A549 (cell line): ENCODE measurements at regions of chr20 and their contacts with region 1.

Region 1: DNA sequence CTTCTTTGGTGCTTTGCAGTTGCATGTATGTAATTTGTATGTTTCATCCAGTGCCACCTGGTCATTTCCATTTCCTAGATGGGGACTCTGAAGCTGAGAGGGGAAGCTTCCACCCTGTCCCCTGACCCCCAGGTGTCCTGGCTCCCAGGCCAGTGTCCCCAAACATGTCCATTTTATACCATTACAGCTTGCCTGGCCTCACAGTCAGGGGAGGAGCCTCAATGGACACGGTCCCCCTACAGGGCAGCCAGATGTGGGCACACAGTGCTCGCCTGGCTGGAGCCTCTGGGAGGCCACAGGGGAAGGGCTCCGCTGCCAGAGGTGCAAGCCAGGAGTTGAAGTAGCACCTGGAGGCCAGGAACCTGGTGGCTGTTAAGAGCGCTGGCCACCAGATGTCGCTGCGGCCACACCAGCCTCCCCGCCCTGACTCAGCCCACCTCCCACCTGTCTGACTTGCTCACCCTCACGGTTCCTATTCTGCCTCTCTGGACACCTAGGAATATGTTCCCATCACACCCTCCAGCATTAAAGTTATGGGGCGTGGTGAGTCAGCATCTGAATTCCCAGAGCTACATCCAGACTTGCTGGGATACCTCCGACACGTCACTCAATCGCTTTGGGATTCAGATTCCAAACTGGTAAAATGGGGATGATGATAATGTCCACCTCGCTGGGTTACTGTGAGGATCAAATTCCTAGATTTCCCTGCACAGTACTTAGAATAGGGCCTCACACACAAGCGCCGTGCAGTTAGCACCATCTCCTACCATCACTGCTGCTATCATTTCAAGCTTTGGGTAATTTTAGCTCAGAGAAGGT is 107.4 kb downstream of the SULF2 start:
- DNase-seq: peak; percentile 59 to 67
- ATAC-seq: peak; percentile 33 to 71
- H3K4me3 ChIP-seq: no peak overlapping the region
- H3K27ac ChIP-seq: no peak overlapping the region
- H3K4me1 ChIP-seq: no peaks in the 10 kb centered on the region
- CTCF ChIP-seq: peak; percentile 86
- EP300 ChIP-seq: no peak
- POLR2A ChIP-seq: no peak
- RAD21 ChIP-seq: peak; percentile 89 to 91

Region 2: DNA sequence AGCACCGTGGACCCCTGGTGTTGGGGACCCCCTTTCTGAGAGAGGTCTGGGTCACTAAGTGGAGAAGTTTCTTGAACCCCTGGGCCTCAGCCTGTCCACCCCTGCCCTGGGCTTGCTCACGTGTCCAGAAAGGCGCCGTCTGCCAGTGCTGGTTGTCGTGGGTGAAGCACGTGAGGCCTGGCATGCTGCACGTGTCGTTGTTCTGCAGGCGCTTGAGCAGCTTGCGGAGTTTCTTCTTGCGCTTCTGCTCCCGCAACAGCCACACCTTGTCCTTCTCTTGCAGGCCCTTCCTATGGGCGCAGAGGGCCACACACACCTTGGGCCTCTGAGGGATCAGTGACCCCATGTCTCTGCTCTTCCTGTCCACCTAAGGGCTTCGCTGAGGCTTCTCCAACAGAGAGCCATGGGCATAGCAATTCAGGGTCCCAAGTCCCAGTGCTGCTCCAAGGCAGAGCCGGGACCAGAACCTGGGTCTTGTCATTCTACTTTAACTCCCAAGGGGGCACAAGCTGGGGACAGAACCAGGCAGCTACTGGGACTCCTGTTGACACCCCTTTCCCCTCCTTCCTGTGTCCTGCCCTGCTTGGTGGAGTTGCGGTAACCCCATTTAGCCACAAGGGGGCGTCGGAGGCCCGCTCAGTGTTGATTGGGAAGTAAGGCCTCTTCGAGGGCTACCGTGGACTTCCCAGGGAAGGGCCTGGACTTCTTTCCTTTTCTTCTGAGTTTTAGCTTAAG is 14.3 kb before region 1 on chr20:
- CTCF ChIA-PET with region 1: interaction called, 64 read pairs
- POLR2A ChIA-PET with region 1: no interaction called
- DNase-seq: peak; percentile 76 to 80
- ATAC-seq: peak; percentile 76 to 84
- H3K4me3 ChIP-seq: no peak overlapping the region
- H3K27ac ChIP-seq: peak overlapping the region in 1 of 2 experiments; percentile 64; a peak in 3 of 6 replicates
- H3K4me1 ChIP-seq: peaks cover 4% of the 10 kb centered on the region; the same call in 1 of the 3 replicates
- CTCF ChIP-seq: peak; percentile 87
- EP300 ChIP-seq: no peak
- POLR2A ChIP-seq: no peak
- RAD21 ChIP-seq: peak; percentile 72 to 76

Region 3: DNA sequence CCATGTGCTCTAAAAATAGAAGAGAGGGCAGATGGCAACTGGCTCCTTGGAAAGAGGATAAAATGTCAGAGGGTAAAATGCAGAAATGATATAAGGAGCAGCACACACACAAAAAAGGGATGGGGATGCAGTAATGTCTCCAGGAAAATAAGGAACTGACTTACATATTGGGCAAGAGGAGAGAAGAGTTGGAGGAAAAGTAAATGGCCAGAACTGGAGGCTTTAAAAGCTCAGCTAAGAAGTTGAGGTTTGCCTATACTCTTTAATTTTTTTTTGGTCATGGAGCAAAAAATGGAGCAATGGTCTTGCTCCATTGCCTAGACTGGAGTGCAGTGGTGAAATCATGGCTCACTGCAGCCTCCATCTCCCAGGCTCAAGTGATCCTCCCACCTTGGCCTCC is 13.8 kb after region 1 on chr20:
- CTCF ChIA-PET with region 1: interaction called, 94 read pairs
- POLR2A ChIA-PET with region 1: no interaction called
- DNase-seq: no peak
- ATAC-seq: no peak
- H3K4me3 ChIP-seq: no peak overlapping the region
- H3K27ac ChIP-seq: no peak overlapping the region
- H3K4me1 ChIP-seq: peaks cover 17% of the 10 kb centered on the region
- CTCF ChIP-seq: no peak
- EP300 ChIP-seq: no peak
- POLR2A ChIP-seq: no peak
- RAD21 ChIP-seq: no peak

Region 4: GRCh38 chr20:47778398-47779338 is 100.8 kb after region 1 on chr20:
- CTCF ChIA-PET with region 1: interaction called, 19 read pairs
- POLR2A ChIA-PET with region 1: no interaction called
- DNase-seq: no peak
- ATAC-seq: no peak
- H3K4me3 ChIP-seq: no peak overlapping the region
- H3K27ac ChIP-seq: no peak overlapping the region
- H3K4me1 ChIP-seq: 0 out of 3 replicates have a peak, but pooled peaks cover under 1% of the 10 kb centered on the region
- CTCF ChIP-seq: no peak
- EP300 ChIP-seq: no peak
- POLR2A ChIP-seq: no peak
- RAD21 ChIP-seq: no peak

Region 5: GRCh38 chr20:48295445-48295963 is 617.7 kb after region 1 on chr20:
- CTCF ChIA-PET with region 1: interaction called, 34 read pairs
- POLR2A ChIA-PET with region 1: interaction called, 3 read pairs
- DNase-seq: peak; percentile 80 to 88
- ATAC-seq: peak; percentile 83 to 87
- H3K4me3 ChIP-seq: no peak overlapping the region
- H3K27ac ChIP-seq: peak overlapping the region; percentile 60 to 85
- H3K4me1 ChIP-seq: peaks cover 57% of the 10 kb centered on the region
- CTCF ChIP-seq: peak; percentile 75
- EP300 ChIP-seq: peak in 1 of 2 experiments; percentile 68; a peak in 2 of 5 replicates
- POLR2A ChIP-seq: no peak
- RAD21 ChIP-seq: peak; percentile 93

Region 6: DNA sequence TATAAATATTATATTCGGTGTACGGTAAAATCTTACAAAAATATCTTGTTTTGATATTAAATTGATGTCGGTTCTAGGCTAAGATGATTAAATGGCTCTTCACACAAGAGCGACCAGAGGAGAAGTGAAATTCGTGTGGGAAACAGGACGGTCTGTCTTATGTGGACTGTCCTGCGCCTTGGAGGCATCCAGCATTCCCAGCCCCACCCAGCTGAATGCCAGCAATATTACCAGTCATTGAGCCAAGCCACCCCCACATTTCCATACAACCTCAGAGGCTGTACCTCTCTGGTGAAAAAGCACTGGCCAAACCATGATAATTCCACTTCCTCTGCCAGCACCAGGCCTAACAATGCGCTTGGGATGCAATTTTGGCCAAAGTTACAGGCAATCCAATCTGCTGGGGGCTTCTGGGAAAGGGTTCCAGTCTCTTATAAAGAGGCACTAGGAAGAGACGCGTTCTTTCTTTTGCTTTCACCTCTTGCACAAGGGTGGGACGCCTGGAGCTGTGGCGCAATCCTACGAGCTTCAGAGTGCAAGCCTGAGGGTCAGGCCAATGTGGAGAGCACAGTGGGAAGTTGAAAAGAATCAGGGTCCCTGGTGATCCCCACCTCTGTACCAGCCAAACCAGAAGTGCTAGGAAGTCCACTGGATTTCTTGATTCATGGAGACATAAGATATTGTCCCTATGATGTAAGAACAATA is 936.9 kb after region 1 on chr20:
- CTCF ChIA-PET with region 1: interaction called, 232 read pairs
- POLR2A ChIA-PET with region 1: no interaction called
- DNase-seq: no peak
- ATAC-seq: no peak; a peak in 1 of 6 replicates
- H3K4me3 ChIP-seq: no peak overlapping the region
- H3K27ac ChIP-seq: no peak overlapping the region
- H3K4me1 ChIP-seq: peaks cover 7% of the 10 kb centered on the region
- CTCF ChIP-seq: no peak
- EP300 ChIP-seq: no peak
- POLR2A ChIP-seq: no peak
- RAD21 ChIP-seq: no peak